ENCODE measurements at regions of chr19 and their contacts with region 1.

Region 1: GRCh38 chr19:58408152-58409009 is at the start of gene ZNF584:
- DNase-seq: peak; percentile 80 to 96 (median 93)
- ATAC-seq: peak; percentile 97
- H3K4me3 ChIP-seq: peak within 1 kb of the TSS; percentile 75 to 79
- H3K4me3 Mint-ChIP-seq: peak within 1 kb of the TSS; percentile 97
- H3K27ac ChIP-seq: peak within 1 kb of the TSS; percentile 67 to 85
- H3K27ac Mint-ChIP-seq: peak within 1 kb of the TSS; percentile 96
- H3K4me1 ChIP-seq: peaks cover 22% of the 10 kb centered on the region
- H3K4me1 Mint-ChIP-seq: peaks cover 33% of the 10 kb centered on the region
- H3K27me3 ChIP-seq: no peaks in the 10 kb centered on the region
- H3K27me3 Mint-ChIP-seq: no peaks in the 10 kb centered on the region
- CTCF ChIP-seq: no peak
- total RNA-seq, gene ZNF584: 1.2 to 1.7 TPM

Region 2: GRCh38 chr19:58182989-58183816 is 225.2 kb before region 1 on chr19 and contains the start of gene ZNF274:
- CTCF ChIA-PET with region 1: no interaction called
- POLR2A ChIA-PET with region 1: no interaction called
- intact Hi-C with region 1: loop called in 1 of 2 experiments (anchors 5 kb)
- DNase-seq: peak; percentile 88 to 96 (median 94)
- ATAC-seq: peak; percentile 86
- H3K4me3 ChIP-seq: peak within 1 kb of the TSS; percentile 90 to 94
- H3K4me3 Mint-ChIP-seq: peak within 1 kb of the TSS; percentile 91
- H3K27ac ChIP-seq: peak within 1 kb of the TSS; percentile 99 to 100
- H3K27ac Mint-ChIP-seq: peak within 1 kb of the TSS; percentile 100
- H3K4me1 ChIP-seq: peaks cover 9% of the 10 kb centered on the region
- H3K4me1 Mint-ChIP-seq: peaks cover 22% of the 10 kb centered on the region
- H3K27me3 ChIP-seq: no peaks in the 10 kb centered on the region
- H3K27me3 Mint-ChIP-seq: no peaks in the 10 kb centered on the region
- CTCF ChIP-seq: no peak
- total RNA-seq, gene ZNF274: 52.7 to 58.9 TPM

Region 3: DNA sequence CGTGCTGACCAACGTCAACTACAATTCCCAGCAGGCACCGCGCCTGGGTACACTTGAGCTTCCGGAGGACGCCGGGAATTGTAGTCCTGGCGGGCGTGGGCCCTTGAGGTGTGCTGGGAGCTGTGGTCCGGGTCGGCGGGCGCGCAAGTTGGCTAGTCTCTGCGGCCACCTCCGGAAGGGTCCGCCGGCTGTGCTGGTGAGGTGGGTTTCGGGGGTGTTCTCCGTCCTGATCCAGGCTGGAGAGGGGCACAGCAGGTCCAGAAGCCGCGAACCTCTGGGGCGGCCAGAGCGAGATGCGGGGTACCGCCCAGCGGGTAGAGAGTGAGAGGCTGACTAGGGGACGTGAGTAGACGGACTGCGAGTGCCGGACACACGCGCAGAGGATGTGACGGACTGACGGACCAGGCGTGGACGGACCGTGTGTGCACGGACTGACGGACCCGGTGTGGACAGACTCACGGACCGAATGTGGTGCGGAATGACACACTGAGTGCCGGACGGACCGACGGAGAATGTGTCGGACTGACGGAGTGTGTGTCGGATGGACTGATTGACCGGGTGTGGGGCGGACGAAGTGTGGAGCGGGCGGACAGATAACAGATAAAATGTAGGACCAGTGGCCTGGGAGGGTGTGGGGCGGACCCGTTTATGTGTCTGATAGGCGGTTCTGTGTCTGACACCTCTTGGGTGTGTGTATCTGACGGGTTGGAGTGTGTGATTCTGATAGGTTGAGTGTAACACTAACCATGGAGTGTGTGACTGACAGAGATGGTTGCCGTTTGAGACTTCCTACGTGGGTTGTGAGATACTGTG is 81.3 kb before region 1 on chr19 and contains the start of gene ZSCAN22:
- CTCF ChIA-PET with region 1: interaction called, 4 read pairs
- POLR2A ChIA-PET with region 1: no interaction called
- intact Hi-C with region 1: loop called (anchors 1 to 5 kb)
- DNase-seq: peak; percentile 76 to 94 (median 89)
- ATAC-seq: peak; percentile 78
- H3K4me3 ChIP-seq: peak within 1 kb of the TSS; percentile 84 to 96
- H3K4me3 Mint-ChIP-seq: no peak within 1 kb of the TSS
- H3K27ac ChIP-seq: peak within 1 kb of the TSS; percentile 77 to 96
- H3K27ac Mint-ChIP-seq: no peak within 1 kb of the TSS
- H3K4me1 ChIP-seq: peaks cover 19% of the 10 kb centered on the region
- H3K4me1 Mint-ChIP-seq: peaks cover 3% of the 10 kb centered on the region
- H3K27me3 ChIP-seq: no peaks in the 10 kb centered on the region
- H3K27me3 Mint-ChIP-seq: no peaks in the 10 kb centered on the region
- CTCF ChIP-seq: no peak
- total RNA-seq, gene ZSCAN22: 1.7 to 2.2 TPM

Region 4: DNA sequence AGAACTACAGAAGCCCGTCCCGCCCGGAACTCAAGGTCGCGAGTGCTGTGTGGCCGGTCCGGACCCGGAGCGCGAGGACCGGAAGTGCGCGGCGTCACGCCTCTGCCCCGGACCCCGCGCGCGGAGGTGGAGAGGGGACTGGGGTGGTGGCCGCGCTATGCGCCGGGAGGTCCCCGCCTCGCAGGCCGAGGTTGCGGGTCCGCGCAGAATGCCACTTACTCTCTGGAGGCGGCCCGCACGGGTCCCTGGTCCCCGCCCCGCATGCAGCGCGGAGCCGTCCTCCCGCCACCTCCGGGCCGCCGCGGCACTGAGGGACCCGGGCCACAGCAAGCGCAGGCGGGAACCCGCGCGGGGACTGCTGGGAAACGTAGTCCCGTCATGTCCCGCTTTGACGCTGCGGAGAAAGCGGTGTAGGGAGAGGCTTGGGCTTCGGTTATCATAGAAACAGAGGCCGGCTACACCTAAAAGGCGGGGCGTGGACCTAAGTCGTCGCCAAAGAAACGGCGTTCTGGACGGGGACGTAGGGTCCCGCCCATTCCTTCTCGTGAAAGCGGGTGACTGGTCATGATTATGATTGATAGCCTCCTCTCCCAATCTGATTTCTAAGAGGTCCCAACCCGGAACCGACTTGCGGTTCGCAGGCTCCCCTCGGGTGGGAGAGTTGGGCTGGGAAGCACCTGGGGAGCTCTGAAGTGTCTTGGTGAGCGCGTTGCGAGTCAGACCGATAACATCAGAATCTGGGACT is 27.5 kb before region 1 on chr19 and contains the start of gene ZNF837:
- CTCF ChIA-PET with region 1: no interaction called
- POLR2A ChIA-PET with region 1: no interaction called
- intact Hi-C with region 1: loop called in 1 of 2 experiments (anchors 1 kb)
- DNase-seq: peak; percentile 94 to 100 (median 97)
- ATAC-seq: peak; percentile 82
- H3K4me3 ChIP-seq: peak within 1 kb of the TSS; percentile 62 to 92
- H3K4me3 Mint-ChIP-seq: peak within 1 kb of the TSS; percentile 98
- H3K27ac ChIP-seq: peak within 1 kb of the TSS; percentile 90 to 96
- H3K27ac Mint-ChIP-seq: peak within 1 kb of the TSS; percentile 98
- H3K4me1 ChIP-seq: peaks cover 31% of the 10 kb centered on the region
- H3K4me1 Mint-ChIP-seq: peaks cover 35% of the 10 kb centered on the region
- H3K27me3 ChIP-seq: no peaks in the 10 kb centered on the region
- H3K27me3 Mint-ChIP-seq: no peaks in the 10 kb centered on the region
- CTCF ChIP-seq: no peak
- total RNA-seq, gene ZNF837: 1.2 to 1.3 TPM

Region 5: GRCh38 chr19:58466760-58467589 is 58.6 kb after region 1 on chr19 and contains the start of gene ZNF324:
- CTCF ChIA-PET with region 1: no interaction called
- POLR2A ChIA-PET with region 1: no interaction called
- intact Hi-C with region 1: loop called (anchors 1 kb)
- DNase-seq: peak; percentile 93 to 99 (median 98)
- ATAC-seq: peak; percentile 88
- H3K4me3 ChIP-seq: peak within 1 kb of the TSS; percentile 63 to 93
- H3K4me3 Mint-ChIP-seq: peak within 1 kb of the TSS; percentile 87
- H3K27ac ChIP-seq: peak within 1 kb of the TSS; percentile 88 to 91
- H3K27ac Mint-ChIP-seq: peak within 1 kb of the TSS; percentile 89
- H3K4me1 ChIP-seq: peaks cover 10% of the 10 kb centered on the region
- H3K4me1 Mint-ChIP-seq: peaks cover 25% of the 10 kb centered on the region
- H3K27me3 ChIP-seq: peaks cover 0 to 3% of the 10 kb centered on the region in 2 experiments
- H3K27me3 Mint-ChIP-seq: no peaks in the 10 kb centered on the region
- CTCF ChIP-seq: no peak
- total RNA-seq, gene ZNF324: 26.9 to 30.5 TPM

Measured in CD8-positive, alpha-beta T cell (primary cell).